Activated CD4-positive, alpha-beta memory T cell treated with anti-CD3 and anti-CD28 coated beads for 36 hours (primary cell): ENCODE measurements at regions of chr6 and their contacts with region 1.

Region 1: GRCh38 chr6:44456070-44456965 is 68.8 kb downstream of the CDC5L start:
- DNase-seq: peak; percentile 57
- H3K4me3 Mint-ChIP-seq: no peak overlapping the region
- H3K27ac Mint-ChIP-seq: no peak overlapping the region
- H3K4me1 Mint-ChIP-seq: peaks cover 3% of the 10 kb centered on the region
- H3K27me3 Mint-ChIP-seq: no peaks in the 10 kb centered on the region

Region 2: GRCh38 chr6:44338228-44339122 is 117.8 kb before region 1 on chr6:
- CTCF ChIA-PET with region 1: no interaction called
- POLR2A ChIA-PET with region 1: no interaction called
- intact Hi-C with region 1: loop called (anchors 10 kb)
- DNase-seq: peak; percentile 79
- H3K4me3 Mint-ChIP-seq: no peak overlapping the region
- H3K27ac Mint-ChIP-seq: peak overlapping the region; percentile 8
- H3K4me1 Mint-ChIP-seq: peaks cover 3% of the 10 kb centered on the region
- H3K27me3 Mint-ChIP-seq: peaks cover 19% of the 10 kb centered on the region

Region 3: GRCh38 chr6:44431118-44431725 is 25.1 kb before region 1 on chr6:
- CTCF ChIA-PET with region 1: interaction called, 31 read pairs
- POLR2A ChIA-PET with region 1: no interaction called
- intact Hi-C with region 1: loop called (anchors 1 kb)
- DNase-seq: peak; percentile 51
- H3K4me3 Mint-ChIP-seq: no peak overlapping the region
- H3K27ac Mint-ChIP-seq: no peak overlapping the region
- H3K4me1 Mint-ChIP-seq: no peaks in the 10 kb centered on the region
- H3K27me3 Mint-ChIP-seq: no peaks in the 10 kb centered on the region

Region 4: DNA sequence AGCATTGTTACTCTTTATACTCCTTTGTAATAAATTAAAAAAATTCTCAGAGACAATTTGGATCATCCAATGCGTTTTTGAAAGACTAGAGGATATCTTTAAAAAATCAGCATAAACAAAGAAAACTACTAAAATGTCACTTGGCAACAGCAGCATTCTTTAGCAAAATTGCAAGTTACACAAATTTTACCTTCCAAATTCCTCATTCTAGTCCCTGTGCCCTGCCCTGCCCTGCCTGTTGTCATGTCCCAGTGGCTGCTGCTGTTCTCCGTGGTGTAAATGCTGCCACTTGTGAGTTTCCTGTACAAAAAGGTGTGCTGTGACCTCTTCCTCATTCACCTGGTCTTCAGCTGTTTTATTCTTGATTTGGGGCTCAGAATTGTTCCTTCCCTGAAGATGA is 14.4 kb after region 1 on chr6:
- CTCF ChIA-PET with region 1: interaction called, 60 read pairs
- POLR2A ChIA-PET with region 1: no interaction called
- intact Hi-C with region 1: no loop called
- DNase-seq: no peak
- H3K4me3 Mint-ChIP-seq: no peak overlapping the region
- H3K27ac Mint-ChIP-seq: no peak overlapping the region
- H3K4me1 Mint-ChIP-seq: no peaks in the 10 kb centered on the region
- H3K27me3 Mint-ChIP-seq: peaks cover 2% of the 10 kb centered on the region